Heart left ventricle (tissue), 16 donors: ENCODE measurements at regions of chr16 and their contacts with region 1.

Region 1: GRCh38 chr16:64745258-64745930 is 376.5 kb downstream of the CDH11 start:
- DNase-seq: no peak
- ATAC-seq: no peak
- H3K4me3 ChIP-seq: no peak overlapping the region
- H3K27ac ChIP-seq: no peak overlapping the region
- H3K4me1 ChIP-seq: no peaks in the 10 kb centered on the region
- H3K27me3 ChIP-seq: no peaks in the 10 kb centered on the region
- CTCF ChIP-seq: no peak
- POLR2A ChIP-seq: no peak

Region 2: GRCh38 chr16:64762211-64762610 is 16.8 kb after region 1 on chr16:
- intact Hi-C with region 1: loop called in 1 of 10 experiments (anchors 1 kb)
- DNase-seq: no peak
- ATAC-seq: no peak
- H3K4me3 ChIP-seq: no peak overlapping the region
- H3K27ac ChIP-seq: no peak overlapping the region
- H3K4me1 ChIP-seq: no peaks in the 10 kb centered on the region
- H3K27me3 ChIP-seq: no peaks in the 10 kb centered on the region
- CTCF ChIP-seq: no peak
- POLR2A ChIP-seq: no peak